Calu3 (cell line): ENCODE measurements at regions of chr6 and their contacts with region 1.

Region 1: GRCh38 chr6:32785781-32786533 is 22.6 kb upstream of the HLA-DQB2 start:
- DNase-seq: peak; percentile 76
- H3K4me3 Mint-ChIP-seq: no peak overlapping the region
- H3K27ac Mint-ChIP-seq: no peak overlapping the region
- H3K4me1 Mint-ChIP-seq: no peaks in the 10 kb centered on the region
- H3K27me3 Mint-ChIP-seq: peaks cover 95% of the 10 kb centered on the region
- CTCF ChIP-seq: peak; percentile 84

Region 2: GRCh38 chr6:32413427-32414047 is 372.4 kb before region 1 on chr6:
- CTCF ChIA-PET with region 1: interaction called, 13 read pairs
- intact Hi-C with region 1: loop called (anchors 2 kb)
- DNase-seq: peak; percentile 94
- H3K4me3 Mint-ChIP-seq: no peak overlapping the region
- H3K27ac Mint-ChIP-seq: no peak overlapping the region
- H3K4me1 Mint-ChIP-seq: peaks cover 21% of the 10 kb centered on the region
- H3K27me3 Mint-ChIP-seq: peaks cover 84% of the 10 kb centered on the region
- CTCF ChIP-seq: peak; percentile 96

Region 3: DNA sequence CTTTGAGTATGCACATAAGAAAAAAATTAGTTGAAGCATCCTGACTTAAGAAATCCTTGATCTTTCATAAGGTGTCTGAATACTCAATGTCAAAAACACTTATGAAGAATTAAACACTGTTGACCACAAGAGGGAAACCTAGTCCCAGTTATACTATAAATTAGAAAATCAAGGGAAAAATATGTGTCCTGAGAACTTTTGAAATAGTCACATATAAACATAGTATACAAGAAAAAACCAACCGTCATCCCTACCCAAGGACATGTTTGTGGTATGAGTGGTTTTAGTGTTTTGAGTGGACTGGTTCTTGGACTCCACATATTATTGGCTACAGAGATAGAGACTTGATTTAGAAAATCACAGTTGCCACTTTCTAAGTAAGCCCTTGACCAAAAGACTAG is 353.9 kb before region 1 on chr6:
- CTCF ChIA-PET with region 1: interaction called, 3 read pairs
- intact Hi-C with region 1: loop called (anchors 5 kb)
- DNase-seq: no peak
- H3K4me3 Mint-ChIP-seq: no peak overlapping the region
- H3K27ac Mint-ChIP-seq: no peak overlapping the region
- H3K4me1 Mint-ChIP-seq: no peaks in the 10 kb centered on the region
- H3K27me3 Mint-ChIP-seq: peaks cover 74% of the 10 kb centered on the region
- CTCF ChIP-seq: peak; percentile 69

Region 4: GRCh38 chr6:32692019-32692418 is 93.9 kb before region 1 on chr6:
- CTCF ChIA-PET with region 1: interaction called, 14 read pairs
- intact Hi-C with region 1: no loop called
- DNase-seq: peak; percentile 81
- H3K4me3 Mint-ChIP-seq: no peak overlapping the region
- H3K27ac Mint-ChIP-seq: no peak overlapping the region
- H3K4me1 Mint-ChIP-seq: no peaks in the 10 kb centered on the region
- H3K27me3 Mint-ChIP-seq: peaks cover 75% of the 10 kb centered on the region
- CTCF ChIP-seq: peak; percentile 83